Aorta (tissue), 5 donors: ENCODE measurements at regions of chr9 and their contacts with region 1.

Region 1: GRCh38 chr9:35400996-35401395 is 88.9 kb upstream of the RUSC2 start:
- DNase-seq: no peak
- ATAC-seq: no peak
- H3K4me3 ChIP-seq: no peak overlapping the region
- H3K27ac ChIP-seq: no peak overlapping the region
- H3K4me1 ChIP-seq: no peaks in the 10 kb centered on the region
- H3K27me3 ChIP-seq: no peaks in the 10 kb centered on the region

Region 2: DNA sequence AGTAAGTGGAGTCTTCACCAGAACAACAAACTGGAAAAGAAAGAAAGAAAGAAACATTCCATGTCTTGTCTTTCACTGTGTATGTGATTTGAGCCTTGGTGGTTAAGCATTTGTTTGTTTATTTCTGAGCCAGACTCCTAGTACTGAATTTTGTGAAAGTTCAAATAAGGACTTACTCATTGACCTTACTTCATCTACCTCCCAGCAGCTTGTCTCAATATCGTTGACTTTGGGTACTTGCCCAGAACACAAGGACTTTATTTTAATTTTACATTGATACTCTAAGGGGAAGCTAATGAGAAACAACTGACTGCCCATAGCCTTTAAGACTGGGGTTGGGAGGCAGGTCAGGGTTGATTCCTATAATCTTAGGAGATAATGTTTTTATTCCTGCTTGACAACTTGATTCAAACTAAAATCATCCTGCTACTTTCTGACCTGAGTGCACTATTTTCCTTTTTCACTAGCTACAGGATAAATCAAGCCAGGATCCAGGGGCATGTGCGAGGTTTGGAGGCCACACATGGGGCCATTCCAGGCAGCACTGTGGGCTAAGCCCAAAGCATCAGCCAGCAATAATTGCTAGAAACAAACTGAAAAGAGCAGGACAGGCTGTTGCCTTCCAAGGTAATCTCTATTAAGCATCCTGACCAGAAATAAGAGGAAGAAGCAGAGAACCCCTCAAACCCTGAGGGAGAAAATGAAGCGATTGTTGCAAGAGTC is 50.0 kb before region 1 on chr9:
- intact Hi-C with region 1: no loop called
- DNase-seq: no peak
- ATAC-seq: no peak
- H3K4me3 ChIP-seq: no peak overlapping the region
- H3K27ac ChIP-seq: peak overlapping the region in 1 of 2 donors; percentile 66
- H3K4me1 ChIP-seq: peaks cover 0 to 4% of the 10 kb centered on the region in 2 donors
- H3K27me3 ChIP-seq: no peaks in the 10 kb centered on the region

Region 3: GRCh38 chr9:35374436-35374835 is 26.6 kb before region 1 on chr9:
- intact Hi-C with region 1: no loop called
- DNase-seq: no peak
- ATAC-seq: no peak
- H3K4me3 ChIP-seq: no peak overlapping the region
- H3K27ac ChIP-seq: no peak overlapping the region
- H3K4me1 ChIP-seq: peaks cover 0 to 2% of the 10 kb centered on the region in 2 donors
- H3K27me3 ChIP-seq: no peaks in the 10 kb centered on the region

Region 4: DNA sequence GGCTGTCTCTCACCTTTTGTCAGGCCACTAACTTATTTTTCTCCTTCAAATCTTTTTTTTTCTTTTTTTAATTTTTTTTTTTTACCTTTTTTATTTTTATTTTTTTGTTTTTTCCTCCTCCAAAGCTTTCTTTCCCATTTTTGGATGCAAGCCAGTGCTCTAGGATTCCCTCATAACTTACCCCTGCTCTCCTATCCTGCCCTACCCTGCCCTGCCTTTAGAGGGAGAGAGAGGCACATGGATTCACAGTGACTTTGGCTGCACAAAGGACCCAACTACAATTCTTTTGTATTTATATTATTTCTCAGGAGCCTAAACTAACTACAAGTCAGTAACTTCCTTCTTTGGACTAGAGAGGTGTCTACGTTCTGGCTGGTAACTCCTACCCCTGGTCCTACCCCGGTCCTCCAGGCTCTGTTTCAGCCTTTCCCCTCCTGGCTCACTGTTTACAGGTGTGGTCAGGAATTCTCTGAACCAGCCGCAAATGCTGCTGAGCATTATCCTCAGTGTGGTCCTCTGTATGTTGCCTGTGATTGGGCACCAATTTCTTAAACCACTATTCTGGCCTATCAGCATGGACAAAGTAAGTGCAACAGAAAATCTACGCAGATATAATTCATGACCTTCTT is 80.5 kb after region 1 on chr9:
- intact Hi-C with region 1: loop called in 1 of 2 experiments (anchors 5 kb)
- DNase-seq: peak in 1 of 2 donors; percentile 63
- ATAC-seq: peak; percentile 73
- H3K4me3 ChIP-seq: no peak overlapping the region
- H3K27ac ChIP-seq: peak overlapping the region in 1 of 2 donors; percentile 18
- H3K4me1 ChIP-seq: no peaks in the 10 kb centered on the region
- H3K27me3 ChIP-seq: no peaks in the 10 kb centered on the region

Region 5: GRCh38 chr9:35859310-35859989 is 458.5 kb after region 1 on chr9:
- intact Hi-C with region 1: no loop called
- DNase-seq: no peak
- ATAC-seq: no peak
- H3K4me3 ChIP-seq: no peak overlapping the region
- H3K27ac ChIP-seq: no peak overlapping the region
- H3K4me1 ChIP-seq: no peaks in the 10 kb centered on the region
- H3K27me3 ChIP-seq: no peaks in the 10 kb centered on the region

Region 6: GRCh38 chr9:36006549-36007315 is 605.7 kb after region 1 on chr9:
- intact Hi-C with region 1: no loop called
- DNase-seq: no peak
- ATAC-seq: no peak
- H3K4me3 ChIP-seq: no peak overlapping the region
- H3K27ac ChIP-seq: no peak overlapping the region
- H3K4me1 ChIP-seq: peaks cover 0 to 2% of the 10 kb centered on the region in 2 donors
- H3K27me3 ChIP-seq: peaks cover 0 to 2% of the 10 kb centered on the region in 2 donors